ENCODE measurements at regions of chr5 and their contacts with region 1.

Region 1: DNA sequence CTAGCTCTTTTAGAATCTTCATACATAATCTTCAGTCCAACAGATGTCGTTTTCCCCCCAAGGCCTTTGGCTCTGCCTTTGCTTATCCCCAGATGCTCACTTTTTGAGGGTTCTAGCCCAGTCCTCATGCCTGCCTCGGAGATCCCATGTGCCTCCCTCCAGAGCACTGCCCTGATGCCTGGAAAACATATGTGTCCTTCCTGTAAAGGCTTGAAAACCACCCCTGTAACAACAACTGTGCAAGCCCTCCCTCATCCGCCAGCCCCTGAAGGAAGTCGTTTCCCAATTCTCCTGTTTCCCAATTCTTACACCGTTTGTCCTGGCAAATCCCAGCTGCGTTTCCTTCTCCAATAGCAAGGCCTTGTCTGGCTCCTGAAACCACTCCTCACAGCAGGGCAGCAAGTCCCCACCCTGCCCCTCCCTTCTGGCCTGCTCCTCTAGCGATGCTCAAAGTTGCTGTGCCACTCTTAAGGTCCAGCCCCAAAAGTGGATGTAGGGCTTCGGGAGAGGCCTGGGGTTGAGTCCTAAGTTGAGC is 52.2 kb downstream of the SLC36A1 start:
- DNase-seq: no peak
- H3K4me3 Mint-ChIP-seq: no peak overlapping the region
- H3K27ac Mint-ChIP-seq: no peak overlapping the region
- H3K4me1 Mint-ChIP-seq: peaks cover 4% of the 10 kb centered on the region
- H3K27me3 Mint-ChIP-seq: no peaks in the 10 kb centered on the region

Region 2: GRCh38 chr5:151284392-151284967 is 215.1 kb before region 1 on chr5:
- CTCF ChIA-PET with region 1: no interaction called
- intact Hi-C with region 1: loop called (anchors 1 kb)
- DNase-seq: peak; percentile 30
- H3K4me3 Mint-ChIP-seq: no peak overlapping the region
- H3K27ac Mint-ChIP-seq: no peak overlapping the region
- H3K4me1 Mint-ChIP-seq: no peaks in the 10 kb centered on the region
- H3K27me3 Mint-ChIP-seq: no peaks in the 10 kb centered on the region

Region 3: DNA sequence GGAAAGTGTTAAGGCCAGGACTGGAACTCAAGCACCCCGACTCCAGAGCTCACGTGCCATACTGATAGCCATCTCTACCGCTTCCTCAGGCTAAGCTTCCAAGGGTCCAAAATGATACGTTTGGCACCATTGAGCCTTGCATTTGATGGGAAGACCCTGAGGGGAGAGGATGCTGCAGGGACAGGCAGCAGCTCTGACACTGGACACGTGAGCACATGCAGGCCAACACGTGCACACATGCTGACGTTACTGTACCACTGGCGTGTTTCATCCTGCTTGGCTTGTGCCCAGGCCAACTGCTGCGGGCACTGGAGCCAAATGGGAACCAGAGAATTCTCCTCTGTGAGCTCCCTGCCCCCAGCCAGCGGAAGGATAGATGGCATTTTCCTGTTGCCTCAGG is 86.4 kb after region 1 on chr5:
- CTCF ChIA-PET with region 1: no interaction called
- intact Hi-C with region 1: no loop called
- DNase-seq: no peak
- H3K4me3 Mint-ChIP-seq: no peak overlapping the region
- H3K27ac Mint-ChIP-seq: no peak overlapping the region
- H3K4me1 Mint-ChIP-seq: no peaks in the 10 kb centered on the region
- H3K27me3 Mint-ChIP-seq: no peaks in the 10 kb centered on the region